Astrocyte of the cerebellum (primary cell): ENCODE measurements at regions of chr9 and their contacts with region 1.

Region 1: DNA sequence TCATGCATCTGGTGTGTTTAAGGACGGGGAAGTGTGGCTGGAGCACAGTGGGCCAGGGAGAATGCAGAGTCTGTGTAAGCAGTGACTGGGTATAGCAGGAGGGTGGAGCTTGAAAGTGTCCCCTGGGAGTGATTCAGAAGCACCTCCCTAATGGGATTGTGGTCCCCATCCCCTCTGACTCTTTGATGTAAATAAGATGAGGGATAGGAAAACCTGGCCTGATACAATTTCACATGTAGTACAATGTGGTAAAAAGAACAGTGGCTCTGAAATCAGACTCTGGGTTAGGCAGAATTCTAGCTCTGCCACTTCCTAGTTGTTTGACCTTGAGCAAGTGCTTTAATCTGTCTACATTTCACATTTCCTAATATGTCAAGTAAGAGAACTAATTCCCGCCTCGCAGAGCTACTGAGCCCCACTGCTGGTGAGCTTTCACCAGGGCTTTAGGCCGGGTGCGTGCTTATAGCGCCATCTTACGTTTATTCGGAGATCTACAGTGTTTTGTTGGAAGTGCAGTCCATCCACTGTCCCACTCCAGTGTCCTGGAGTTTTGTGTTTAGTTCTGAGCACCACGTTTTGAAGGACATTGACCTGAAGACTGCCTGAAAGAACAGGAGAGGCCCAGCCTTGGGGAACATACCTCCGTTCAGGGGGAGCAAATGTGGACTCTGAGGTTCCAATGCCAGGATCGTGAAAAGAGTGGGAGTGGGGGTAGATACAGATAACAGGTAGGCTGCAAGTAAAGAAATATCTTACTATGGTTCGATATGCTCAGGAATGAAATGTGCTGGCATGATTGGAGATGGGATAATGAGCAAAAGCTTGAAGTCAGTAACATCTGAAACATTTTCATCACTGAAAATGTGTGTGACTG is 51.2 kb upstream of the TESK1 start:
- DNase-seq: peak; percentile 54
- H3K4me3 ChIP-seq: no peak overlapping the region
- CTCF ChIP-seq: peak; percentile 83

Region 2: DNA sequence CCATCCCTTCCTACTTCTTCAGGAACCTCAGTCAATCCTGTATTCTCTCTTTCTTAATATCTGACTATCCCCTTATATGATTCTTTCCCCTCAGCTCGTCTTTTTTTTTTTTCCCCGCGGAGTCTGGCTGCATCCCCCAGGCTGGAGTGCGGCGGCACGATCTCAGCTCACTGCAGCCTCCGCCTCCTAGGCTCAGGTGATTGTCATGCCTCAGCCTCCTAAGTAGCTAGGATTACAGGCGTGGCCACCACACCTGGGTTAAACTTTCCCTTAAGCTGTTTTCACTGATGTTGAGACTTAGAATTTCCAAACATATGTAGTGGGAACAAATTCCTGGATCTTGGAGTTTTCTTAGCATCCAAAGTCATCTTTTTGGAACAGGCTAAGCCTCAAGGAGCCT is 77.3 kb before region 1 on chr9:
- in situ Hi-C with region 1: loop called (anchors 5 kb)
- DNase-seq: no peak
- H3K4me3 ChIP-seq: no peak overlapping the region
- CTCF ChIP-seq: no peak